ENCODE measurements at regions of chr3 and their contacts with region 1.

Region 1: GRCh38 chr3:127970966-127971592 is 56.0 kb downstream of the KBTBD12 start:
- DNase-seq: peak; percentile 71
- H3K4me3 Mint-ChIP-seq: no peak overlapping the region
- H3K27ac Mint-ChIP-seq: no peak overlapping the region
- H3K4me1 Mint-ChIP-seq: no peaks in the 10 kb centered on the region
- H3K27me3 Mint-ChIP-seq: peaks cover 51% of the 10 kb centered on the region

Region 2: DNA sequence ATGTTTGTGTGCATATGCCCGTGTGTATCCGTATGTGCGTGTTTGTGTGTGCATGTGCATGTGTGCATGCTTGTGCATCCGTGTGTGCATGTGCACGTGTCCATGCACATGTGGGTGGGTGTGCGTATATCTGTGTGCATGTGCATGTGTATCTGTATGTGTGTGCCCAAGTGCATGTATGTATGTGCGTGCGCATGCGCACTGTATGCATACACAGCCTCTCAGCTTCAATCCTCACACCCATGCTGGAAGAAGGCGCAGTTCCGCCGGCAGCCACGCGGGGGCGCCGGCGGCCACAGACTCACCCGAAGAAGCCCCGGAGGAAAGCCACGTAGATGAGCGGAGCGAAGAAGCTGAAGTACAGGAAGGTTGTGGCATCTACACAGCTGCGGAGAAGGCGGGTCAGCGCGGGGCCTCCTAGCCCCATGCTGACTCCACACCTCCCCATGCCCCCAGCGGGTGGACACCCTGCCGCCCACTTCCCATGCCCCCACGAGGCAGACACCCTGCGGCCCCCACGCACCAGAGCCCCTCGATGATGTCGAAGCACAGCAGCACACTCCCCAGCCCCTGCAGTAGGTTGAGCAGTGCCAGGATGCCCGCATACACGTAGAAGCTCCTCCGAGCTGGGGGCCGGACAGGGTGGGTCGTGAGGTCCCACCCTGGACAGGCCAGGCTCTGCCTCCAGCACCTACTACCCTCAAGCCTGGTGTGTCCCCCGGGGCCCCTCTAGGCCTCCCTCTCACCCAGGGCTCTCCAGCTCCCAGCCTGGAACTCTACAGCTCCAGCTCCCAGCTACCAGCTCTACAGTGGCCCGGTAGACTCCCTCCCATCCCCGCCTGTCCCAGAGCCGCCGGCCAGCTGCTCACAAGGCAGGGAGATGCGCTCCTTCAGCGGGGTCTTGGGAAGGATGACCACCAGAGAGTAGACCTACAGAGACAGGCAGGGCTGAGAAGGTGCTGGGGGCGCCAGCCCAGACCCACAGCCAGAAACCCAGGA is 395.9 kb before region 1 on chr3:
- intact Hi-C with region 1: loop called (anchors 2 kb)
- DNase-seq: peak; percentile 96
- H3K4me3 Mint-ChIP-seq: no peak overlapping the region
- H3K27ac Mint-ChIP-seq: no peak overlapping the region
- H3K4me1 Mint-ChIP-seq: peaks cover 7% of the 10 kb centered on the region
- H3K27me3 Mint-ChIP-seq: no peaks in the 10 kb centered on the region

Region 3: GRCh38 chr3:127612966-127613365 is 358.1 kb before region 1 on chr3:
- intact Hi-C with region 1: no loop called
- DNase-seq: no peak
- H3K4me3 Mint-ChIP-seq: no peak overlapping the region
- H3K27ac Mint-ChIP-seq: no peak overlapping the region
- H3K4me1 Mint-ChIP-seq: peaks cover 32% of the 10 kb centered on the region
- H3K27me3 Mint-ChIP-seq: no peaks in the 10 kb centered on the region

Region 4: DNA sequence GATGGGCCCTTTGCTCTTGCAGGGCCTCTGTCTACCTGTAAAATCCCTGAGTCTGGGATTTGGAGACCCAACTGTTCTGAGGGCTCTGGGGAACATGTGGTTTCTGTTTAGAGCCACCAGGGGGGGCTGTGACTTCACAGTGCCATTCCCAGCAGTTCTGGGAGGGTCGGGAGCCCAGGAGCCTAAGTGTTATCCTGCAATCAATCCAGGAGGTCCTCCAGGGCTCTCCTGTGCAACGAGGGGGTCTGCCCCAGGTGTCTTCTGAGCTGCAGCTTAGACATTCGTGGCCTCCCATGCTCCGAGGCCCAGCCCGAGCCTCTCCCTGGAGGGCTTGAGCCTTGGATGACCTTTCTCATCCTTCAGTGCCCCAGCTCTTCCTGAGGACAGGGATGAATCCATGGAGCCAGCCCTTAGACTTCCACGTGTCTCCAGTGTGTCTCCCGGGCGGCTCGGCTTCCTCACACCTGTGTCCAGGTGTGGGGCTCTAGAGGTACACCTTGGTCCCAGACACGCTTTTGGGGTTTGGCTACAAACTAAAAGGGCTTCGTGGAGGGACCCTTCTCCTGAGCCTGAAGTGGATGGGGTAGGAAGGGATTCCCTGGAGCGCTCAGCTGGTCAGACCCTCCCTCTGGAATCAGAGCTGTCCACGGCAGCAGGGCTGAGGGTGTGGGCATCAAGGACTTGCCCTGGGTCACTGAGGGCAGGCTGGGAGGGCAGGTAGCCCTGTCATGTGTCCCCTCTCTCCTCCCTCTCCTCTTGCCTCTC is 318.7 kb before region 1 on chr3:
- intact Hi-C with region 1: loop called (anchors 1 kb)
- DNase-seq: peak; percentile 76
- H3K4me3 Mint-ChIP-seq: no peak overlapping the region
- H3K27ac Mint-ChIP-seq: no peak overlapping the region
- H3K4me1 Mint-ChIP-seq: no peaks in the 10 kb centered on the region
- H3K27me3 Mint-ChIP-seq: peaks cover 6% of the 10 kb centered on the region

Region 5: GRCh38 chr3:127697551-127698240 is 273.4 kb before region 1 on chr3:
- intact Hi-C with region 1: loop called (anchors 2 kb)
- DNase-seq: peak; percentile 86
- H3K4me3 Mint-ChIP-seq: no peak overlapping the region
- H3K27ac Mint-ChIP-seq: no peak overlapping the region
- H3K4me1 Mint-ChIP-seq: peaks cover 3% of the 10 kb centered on the region
- H3K27me3 Mint-ChIP-seq: no peaks in the 10 kb centered on the region